MCF 10A (cell line): ENCODE measurements at regions of chr12 and their contacts with region 1.

Region 1: DNA sequence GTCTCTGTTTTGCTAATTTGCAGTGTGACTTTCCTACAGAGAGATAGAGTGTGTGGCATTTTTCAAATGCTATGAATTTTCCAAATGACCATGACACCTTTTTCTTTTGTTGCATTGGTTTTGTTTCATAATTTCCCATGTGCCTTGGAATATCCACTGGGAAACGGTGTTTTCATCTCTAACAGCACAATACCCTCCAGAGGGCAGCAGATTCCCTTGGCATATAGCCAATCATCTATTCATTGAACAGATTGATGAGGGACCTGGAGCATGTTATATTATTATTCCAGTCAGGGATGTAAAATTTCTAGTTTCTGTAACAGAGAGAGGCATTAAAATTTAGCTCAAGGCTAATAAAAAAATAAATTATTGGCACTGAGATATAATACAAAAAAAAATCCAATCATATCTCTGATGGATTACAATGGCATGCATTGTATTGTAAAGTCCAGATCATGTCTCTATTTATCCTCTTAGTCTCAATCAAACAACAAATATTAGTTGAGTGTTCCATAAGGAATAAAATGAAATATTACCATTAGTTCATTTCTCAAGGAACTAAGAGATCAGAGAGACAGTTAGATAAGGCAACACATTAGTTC is 29.6 kb upstream of the NTN4 start:
- DNase-seq: peak; percentile 73
- H3K4me3 Mint-ChIP-seq: no peak overlapping the region
- H3K27ac Mint-ChIP-seq: no peak overlapping the region
- H3K4me1 Mint-ChIP-seq: no peaks in the 10 kb centered on the region
- H3K27me3 Mint-ChIP-seq: peaks cover 12% of the 10 kb centered on the region
- CTCF ChIP-seq: peak; percentile 47

Region 2: DNA sequence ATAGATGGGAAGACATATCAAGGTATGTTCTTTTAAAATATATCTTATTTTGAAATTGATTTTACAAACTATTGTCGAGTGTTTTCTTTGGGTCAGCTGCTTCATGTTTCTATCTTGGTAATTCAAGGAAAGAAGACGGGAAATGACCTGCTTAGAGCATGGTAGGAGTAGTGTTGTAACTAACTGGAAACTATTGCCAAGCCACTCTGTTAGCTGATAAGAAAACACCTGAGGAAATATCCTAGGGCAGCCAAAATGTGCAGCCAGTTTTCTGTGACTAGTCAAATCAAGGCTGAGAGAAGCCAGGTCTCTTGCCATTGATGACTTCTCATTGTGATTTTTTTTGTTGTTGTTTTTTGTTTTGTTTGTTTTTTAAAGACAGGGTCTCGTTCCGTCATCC is 316.1 kb before region 1 on chr12:
- CTCF ChIA-PET with region 1: no interaction called
- POLR2A ChIA-PET with region 1: no interaction called
- intact Hi-C with region 1: no loop called
- DNase-seq: no peak
- H3K4me3 Mint-ChIP-seq: no peak overlapping the region
- H3K27ac Mint-ChIP-seq: no peak overlapping the region
- H3K4me1 Mint-ChIP-seq: peaks cover 11% of the 10 kb centered on the region
- H3K27me3 Mint-ChIP-seq: no peaks in the 10 kb centered on the region
- CTCF ChIP-seq: no peak

Region 3: GRCh38 chr12:95574799-95575452 is 245.3 kb before region 1 on chr12:
- CTCF ChIA-PET with region 1: interaction called, 114 read pairs
- POLR2A ChIA-PET with region 1: interaction called, 3 read pairs
- intact Hi-C with region 1: no loop called
- DNase-seq: peak; percentile 60
- H3K4me3 Mint-ChIP-seq: no peak overlapping the region
- H3K27ac Mint-ChIP-seq: peak overlapping the region; percentile 23
- H3K4me1 Mint-ChIP-seq: no peaks in the 10 kb centered on the region
- H3K27me3 Mint-ChIP-seq: no peaks in the 10 kb centered on the region
- CTCF ChIP-seq: peak; percentile 64

Region 4: GRCh38 chr12:95582230-95583058 is 237.8 kb before region 1 on chr12:
- CTCF ChIA-PET with region 1: interaction called, 114 read pairs
- POLR2A ChIA-PET with region 1: interaction called, 4 read pairs
- intact Hi-C with region 1: loop called (anchors 1 kb)
- DNase-seq: peak; percentile 51
- H3K4me3 Mint-ChIP-seq: no peak overlapping the region
- H3K27ac Mint-ChIP-seq: no peak overlapping the region
- H3K4me1 Mint-ChIP-seq: no peaks in the 10 kb centered on the region
- H3K27me3 Mint-ChIP-seq: no peaks in the 10 kb centered on the region
- CTCF ChIP-seq: peak; percentile 54

Region 5: DNA sequence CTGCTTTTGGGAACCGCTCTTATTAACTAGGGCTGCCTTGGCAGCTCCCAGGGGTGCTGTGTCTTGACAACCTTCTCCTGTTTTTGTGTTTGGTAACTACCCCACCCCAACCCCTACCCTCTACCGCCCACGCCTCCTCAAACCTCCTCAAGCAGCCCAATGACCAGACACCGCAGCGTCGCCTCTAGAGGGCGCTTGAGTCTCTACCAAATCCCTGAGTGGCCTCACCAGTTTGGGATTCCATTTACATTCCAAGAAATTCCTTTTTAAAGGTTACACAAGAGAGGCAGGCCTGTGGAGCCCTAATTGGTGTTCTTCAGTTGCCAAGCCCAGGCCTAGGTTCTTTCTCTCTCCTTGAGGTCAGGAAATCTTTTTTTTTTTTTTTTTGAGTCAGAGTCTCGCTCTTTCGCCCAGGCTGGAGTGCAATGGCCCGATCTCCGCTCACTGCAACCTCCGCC is 196.6 kb before region 1 on chr12:
- CTCF ChIA-PET with region 1: interaction called, 11 read pairs
- POLR2A ChIA-PET with region 1: no interaction called
- intact Hi-C with region 1: loop called (anchors 1 kb)
- DNase-seq: peak; percentile 90
- H3K4me3 Mint-ChIP-seq: no peak overlapping the region
- H3K27ac Mint-ChIP-seq: no peak overlapping the region
- H3K4me1 Mint-ChIP-seq: no peaks in the 10 kb centered on the region
- H3K27me3 Mint-ChIP-seq: no peaks in the 10 kb centered on the region
- CTCF ChIP-seq: peak; percentile 63

Region 6: DNA sequence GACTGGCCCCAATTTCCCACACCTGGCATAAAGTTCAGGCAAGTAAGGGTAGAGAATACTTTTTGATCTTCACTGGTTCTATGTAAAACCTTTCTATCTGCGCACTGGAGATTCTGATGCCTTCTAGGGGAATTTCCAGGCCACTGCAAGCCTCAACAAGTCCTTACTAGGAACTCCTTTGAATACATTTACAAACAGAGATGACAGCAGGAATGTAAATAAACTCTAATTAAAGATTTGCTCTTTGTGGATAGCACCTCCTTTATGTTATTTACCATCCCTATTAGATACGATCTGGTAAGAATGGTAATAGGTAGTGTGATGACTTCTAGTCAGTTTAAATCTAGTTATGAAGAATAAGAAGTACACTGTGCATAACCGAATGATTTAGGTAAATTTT is 98.9 kb before region 1 on chr12:
- CTCF ChIA-PET with region 1: interaction called, 3 read pairs
- POLR2A ChIA-PET with region 1: no interaction called
- intact Hi-C with region 1: loop called (anchors 5 kb)
- DNase-seq: peak; percentile 58
- H3K4me3 Mint-ChIP-seq: no peak overlapping the region
- H3K27ac Mint-ChIP-seq: no peak overlapping the region
- H3K4me1 Mint-ChIP-seq: peaks cover 7% of the 10 kb centered on the region
- H3K27me3 Mint-ChIP-seq: no peaks in the 10 kb centered on the region
- CTCF ChIP-seq: no peak

Region 7: GRCh38 chr12:95848575-95849388 is 28.6 kb after region 1 on chr12:
- CTCF ChIA-PET with region 1: interaction called, 14 read pairs
- POLR2A ChIA-PET with region 1: no interaction called
- intact Hi-C with region 1: loop called (anchors 1 kb)
- DNase-seq: peak; percentile 58
- H3K4me3 Mint-ChIP-seq: no peak overlapping the region
- H3K27ac Mint-ChIP-seq: no peak overlapping the region
- H3K4me1 Mint-ChIP-seq: no peaks in the 10 kb centered on the region
- H3K27me3 Mint-ChIP-seq: peaks cover 10% of the 10 kb centered on the region
- CTCF ChIP-seq: peak; percentile 41

Region 8: GRCh38 chr12:95877622-95878021 is 57.4 kb after region 1 on chr12:
- CTCF ChIA-PET with region 1: no interaction called
- POLR2A ChIA-PET with region 1: no interaction called
- intact Hi-C with region 1: no loop called
- DNase-seq: no peak
- H3K4me3 Mint-ChIP-seq: no peak overlapping the region
- H3K27ac Mint-ChIP-seq: no peak overlapping the region
- H3K4me1 Mint-ChIP-seq: no peaks in the 10 kb centered on the region
- H3K27me3 Mint-ChIP-seq: no peaks in the 10 kb centered on the region
- CTCF ChIP-seq: no peak